ENCODE measurements at regions of chr1 and their contacts with region 1.

Region 1: DNA sequence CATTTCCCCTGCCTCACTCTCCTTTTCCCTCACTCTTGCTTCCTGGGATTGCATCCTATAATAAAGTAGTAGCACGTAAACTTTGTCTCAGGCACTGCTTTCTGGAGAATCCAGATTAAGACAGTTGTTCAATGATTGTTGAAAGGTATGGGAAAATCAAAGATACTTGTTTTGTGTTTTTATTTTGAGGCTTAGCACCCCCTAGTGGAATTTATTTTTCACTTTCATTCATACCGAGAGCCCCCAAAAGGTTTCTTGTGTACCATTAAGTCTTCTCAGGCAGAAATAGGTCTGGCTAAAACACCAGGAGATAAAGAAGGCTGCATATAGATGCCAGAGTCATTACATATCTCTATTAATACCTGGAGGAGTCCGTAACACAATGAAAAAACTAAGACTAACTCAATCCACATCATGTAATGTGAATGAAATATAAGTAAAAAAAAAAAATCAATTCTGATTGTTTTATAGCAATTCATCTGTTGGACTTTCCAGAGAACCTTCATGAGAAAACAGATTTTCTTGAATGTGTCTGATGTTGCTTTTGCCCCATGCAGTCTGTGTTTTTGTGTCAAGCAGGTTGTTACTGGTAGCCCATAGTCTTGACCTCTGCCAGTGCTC is 103.5 kb downstream of the RPE65 start:
- DNase-seq: peak; percentile 18
- H3K4me3 ChIP-seq: no peak overlapping the region
- H3K27ac ChIP-seq: no peak overlapping the region
- H3K4me1 ChIP-seq: no peaks in the 10 kb centered on the region
- H3K27me3 ChIP-seq: no peaks in the 10 kb centered on the region
- CTCF ChIP-seq: peak; percentile 43 to 48

Region 2: DNA sequence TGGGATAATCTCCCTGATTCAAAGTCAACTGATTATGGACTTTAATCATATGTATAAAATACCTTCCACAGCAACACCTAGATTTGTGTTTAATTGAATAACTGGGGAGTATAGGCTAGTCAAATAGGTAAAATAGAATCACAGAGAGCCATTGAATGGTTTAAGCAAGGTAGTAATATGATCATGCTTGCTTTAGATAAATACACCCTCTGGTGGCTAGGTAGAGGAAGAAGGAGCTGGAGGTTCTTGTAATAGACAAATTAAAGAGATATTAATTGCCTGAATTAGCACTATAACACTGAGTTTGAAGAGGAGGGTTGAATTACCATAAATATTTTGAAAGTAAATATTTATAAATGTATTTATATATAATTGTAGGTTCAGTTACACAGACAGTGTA is 336.2 kb before region 1 on chr1:
- CTCF ChIA-PET with region 1: no interaction called
- dilution Hi-C with region 1: no loop called
- in situ Hi-C with region 1: no loop called
- intact Hi-C with region 1: no loop called
- DNase-seq: peak; percentile 17
- H3K4me3 ChIP-seq: no peak overlapping the region
- H3K27ac ChIP-seq: no peak overlapping the region
- H3K4me1 ChIP-seq: no peaks in the 10 kb centered on the region
- H3K27me3 ChIP-seq: no peaks in the 10 kb centered on the region
- CTCF ChIP-seq: peak; percentile 36 to 54

Region 3: DNA sequence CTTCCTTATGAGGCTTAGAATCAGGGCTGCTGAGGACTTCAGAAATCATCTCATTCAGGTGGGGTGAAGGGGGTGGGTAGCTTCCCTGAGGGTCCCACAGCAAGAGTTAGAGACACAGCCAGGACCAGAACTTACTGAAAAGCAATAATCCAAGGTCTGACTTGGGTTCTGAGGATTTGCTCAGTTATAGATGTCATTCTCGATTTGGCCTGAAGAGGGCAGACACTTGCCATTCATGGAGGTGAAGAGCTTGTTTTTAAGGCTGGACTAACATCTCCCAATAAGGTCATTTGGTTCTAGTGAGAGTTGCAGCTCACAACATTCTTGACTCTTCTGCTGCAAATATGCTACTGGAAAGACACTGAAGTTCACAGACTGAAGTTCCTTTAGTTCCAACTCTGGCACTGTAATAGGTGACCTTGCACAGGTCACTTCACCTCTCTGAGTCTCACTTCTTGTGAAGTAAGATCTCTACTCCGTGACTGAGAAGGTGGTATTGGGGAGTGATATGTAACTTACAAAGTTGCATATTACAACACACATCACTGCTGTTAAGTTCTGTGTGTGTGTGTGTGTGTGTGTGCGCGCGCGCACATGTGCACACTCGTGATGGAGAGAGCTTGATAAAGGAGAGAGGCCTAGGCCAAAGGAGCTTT is 226.0 kb before region 1 on chr1:
- CTCF ChIA-PET with region 1: interaction called, 5 read pairs
- dilution Hi-C with region 1: loop called (anchors 5 kb)
- in situ Hi-C with region 1: loop called (anchors 5 kb)
- intact Hi-C with region 1: loop called (anchors 1 kb)
- DNase-seq: peak; percentile 64
- H3K4me3 ChIP-seq: no peak overlapping the region
- H3K27ac ChIP-seq: no peak overlapping the region
- H3K4me1 ChIP-seq: no peaks in the 10 kb centered on the region
- H3K27me3 ChIP-seq: no peaks in the 10 kb centered on the region
- CTCF ChIP-seq: peak; percentile 76 to 78

Region 4: DNA sequence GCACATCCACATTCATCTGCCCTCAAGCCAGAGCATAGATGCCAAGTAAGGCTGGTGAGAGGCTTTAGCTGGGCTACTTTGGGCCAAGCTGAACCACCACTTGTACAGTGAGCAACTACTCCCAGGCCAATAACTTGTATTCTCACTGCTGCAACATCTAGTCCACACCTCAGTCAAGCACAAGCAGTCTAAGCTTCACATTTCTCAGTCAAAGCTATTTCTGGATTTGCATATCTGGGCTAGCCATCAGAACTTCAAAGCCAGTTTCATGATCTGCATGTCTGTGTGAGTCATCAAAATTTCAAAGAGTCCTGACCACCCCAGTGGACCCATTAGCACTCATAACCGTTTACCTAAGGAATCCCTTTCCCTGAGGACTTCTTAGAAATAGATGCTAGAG is 218.1 kb before region 1 on chr1:
- CTCF ChIA-PET with region 1: no interaction called
- dilution Hi-C with region 1: loop called (anchors 5 kb)
- in situ Hi-C with region 1: no loop called
- intact Hi-C with region 1: no loop called
- DNase-seq: peak; percentile 17
- H3K4me3 ChIP-seq: no peak overlapping the region
- H3K27ac ChIP-seq: no peak overlapping the region
- H3K4me1 ChIP-seq: no peaks in the 10 kb centered on the region
- H3K27me3 ChIP-seq: no peaks in the 10 kb centered on the region
- CTCF ChIP-seq: no peak

Region 5: DNA sequence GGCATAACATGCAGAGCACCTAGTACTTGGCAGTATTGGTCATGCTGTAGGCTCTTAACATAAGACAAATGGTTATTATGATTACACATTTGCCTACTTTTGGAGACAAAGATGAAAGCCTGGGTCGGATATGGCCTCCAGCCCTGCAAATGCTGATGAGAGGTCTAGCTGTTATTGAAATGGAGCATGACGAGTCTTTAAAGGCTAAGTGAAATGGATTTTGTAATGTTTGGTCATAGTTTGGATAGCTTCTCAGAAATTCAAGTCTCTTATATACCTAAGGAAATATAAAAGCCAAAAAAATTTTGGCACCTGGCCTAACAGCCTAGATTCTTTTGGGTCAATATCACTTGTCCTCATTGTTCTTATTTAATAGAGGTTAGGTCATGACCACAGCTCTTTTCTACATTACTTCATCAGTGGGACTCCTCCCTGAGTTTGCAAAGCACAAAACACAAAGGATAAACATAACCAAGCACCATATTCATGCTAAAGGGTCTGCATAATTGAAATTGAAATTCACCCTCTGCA is 44.8 kb before region 1 on chr1:
- CTCF ChIA-PET with region 1: no interaction called
- dilution Hi-C with region 1: loop called (anchors 5 kb)
- in situ Hi-C with region 1: no loop called
- intact Hi-C with region 1: no loop called
- DNase-seq: peak; percentile 20
- H3K4me3 ChIP-seq: no peak overlapping the region
- H3K27ac ChIP-seq: no peak overlapping the region
- H3K4me1 ChIP-seq: no peaks in the 10 kb centered on the region
- H3K27me3 ChIP-seq: no peaks in the 10 kb centered on the region
- CTCF ChIP-seq: no peak

Region 6: DNA sequence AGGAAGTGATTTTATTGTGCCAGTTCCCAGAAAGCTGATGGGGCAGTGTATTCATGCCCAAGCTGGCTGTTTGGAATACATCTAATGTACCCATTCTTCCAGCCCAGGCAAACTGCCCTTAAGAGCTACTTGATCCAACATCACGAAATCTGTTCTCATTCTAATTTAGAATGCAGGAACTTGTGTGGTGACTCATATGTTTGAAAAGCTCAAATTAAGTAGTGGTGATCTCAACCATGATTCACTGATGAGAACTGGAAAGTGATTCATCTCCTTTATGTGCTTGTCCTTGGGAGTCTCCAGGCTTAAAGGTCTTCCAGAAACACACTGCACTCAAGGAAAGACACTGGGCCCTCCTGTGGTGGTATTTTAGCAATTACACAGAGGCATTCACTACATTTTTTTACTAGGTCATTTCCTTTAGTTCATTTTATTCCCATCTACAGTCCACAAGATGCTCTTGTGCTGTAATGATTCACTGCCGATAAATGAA is 38.1 kb after region 1 on chr1:
- CTCF ChIA-PET with region 1: no interaction called
- dilution Hi-C with region 1: no loop called
- in situ Hi-C with region 1: no loop called
- intact Hi-C with region 1: loop called (anchors 1 kb)
- DNase-seq: peak; percentile 98
- H3K4me3 ChIP-seq: no peak overlapping the region
- H3K27ac ChIP-seq: peak overlapping the region; percentile 88
- H3K4me1 ChIP-seq: peaks cover 34% of the 10 kb centered on the region
- H3K27me3 ChIP-seq: no peaks in the 10 kb centered on the region
- CTCF ChIP-seq: peak; percentile 47

Region 7: GRCh38 chr1:68442822-68443556 is 96.7 kb after region 1 on chr1:
- CTCF ChIA-PET with region 1: interaction called, 3 read pairs
- dilution Hi-C with region 1: no loop called
- in situ Hi-C with region 1: no loop called
- intact Hi-C with region 1: loop called (anchors 1 kb)
- DNase-seq: peak; percentile 81
- H3K4me3 ChIP-seq: no peak overlapping the region
- H3K27ac ChIP-seq: no peak overlapping the region
- H3K4me1 ChIP-seq: peaks cover 8% of the 10 kb centered on the region
- H3K27me3 ChIP-seq: no peaks in the 10 kb centered on the region
- CTCF ChIP-seq: peak; percentile 73 to 76

Region 8: DNA sequence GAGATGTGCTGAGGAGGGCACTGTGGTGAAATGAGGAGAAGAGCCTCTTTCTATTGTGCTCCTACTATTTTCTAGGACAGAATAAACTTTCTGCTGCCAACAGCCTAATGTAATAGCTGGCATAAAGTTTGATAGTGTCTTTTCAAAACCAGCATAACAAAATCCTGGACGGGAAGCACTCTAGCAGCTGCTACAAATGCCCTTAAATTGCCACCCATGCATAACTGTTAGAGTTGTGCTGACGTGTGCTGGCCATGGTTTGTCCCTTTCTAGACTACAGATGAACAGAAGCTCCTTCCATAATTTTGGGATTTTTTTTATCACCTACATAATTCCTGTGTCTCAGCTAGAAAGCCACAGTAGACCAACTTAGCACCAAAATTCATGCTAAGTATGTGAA is 239.1 kb after region 1 on chr1:
- CTCF ChIA-PET with region 1: no interaction called
- dilution Hi-C with region 1: no loop called
- in situ Hi-C with region 1: no loop called
- intact Hi-C with region 1: loop called (anchors 5 kb)
- DNase-seq: no peak
- H3K4me3 ChIP-seq: no peak overlapping the region
- H3K27ac ChIP-seq: no peak overlapping the region
- H3K4me1 ChIP-seq: no peaks in the 10 kb centered on the region
- H3K27me3 ChIP-seq: peaks cover 2% of the 10 kb centered on the region
- CTCF ChIP-seq: no peak

Region 9: GRCh38 chr1:68696221-68696620 is 349.9 kb after region 1 on chr1:
- CTCF ChIA-PET with region 1: no interaction called
- dilution Hi-C with region 1: no loop called
- in situ Hi-C with region 1: no loop called
- intact Hi-C with region 1: no loop called
- DNase-seq: no peak
- H3K4me3 ChIP-seq: no peak overlapping the region
- H3K27ac ChIP-seq: no peak overlapping the region
- H3K4me1 ChIP-seq: no peaks in the 10 kb centered on the region
- H3K27me3 ChIP-seq: no peaks in the 10 kb centered on the region
- CTCF ChIP-seq: no peak